Dendritic cell treated with granulocyte-macrophage colony-stimulating factor and Interleukin-4, amounts not matched to agents 40 ng/mL and 50 ng/mL, for 4 days (primary cell): ENCODE measurements at regions of chr6 and their contacts with region 1.

Region 1: GRCh38 chr6:106444777-106445507 is 84.4 kb downstream of the CRYBG1 start:
- H3K4me3 Mint-ChIP-seq: no peak overlapping the region
- H3K27ac Mint-ChIP-seq: no peak overlapping the region
- H3K4me1 Mint-ChIP-seq: peaks cover 19% of the 10 kb centered on the region
- H3K27me3 Mint-ChIP-seq: peaks cover 21% of the 10 kb centered on the region

Region 2: GRCh38 chr6:106069478-106069877 is 375.5 kb before region 1 on chr6:
- intact Hi-C with region 1: no loop called
- H3K4me3 Mint-ChIP-seq: no peak overlapping the region
- H3K27ac Mint-ChIP-seq: no peak overlapping the region
- H3K4me1 Mint-ChIP-seq: peaks cover 37% of the 10 kb centered on the region
- H3K27me3 Mint-ChIP-seq: no peaks in the 10 kb centered on the region

Region 3: GRCh38 chr6:106339334-106340029 is 105.5 kb before region 1 on chr6:
- intact Hi-C with region 1: loop called (anchors 5 kb)
- H3K4me3 Mint-ChIP-seq: peak overlapping the region; percentile 40
- H3K27ac Mint-ChIP-seq: no peak overlapping the region
- H3K4me1 Mint-ChIP-seq: peaks cover 8% of the 10 kb centered on the region
- H3K27me3 Mint-ChIP-seq: peaks cover 6% of the 10 kb centered on the region

Region 4: DNA sequence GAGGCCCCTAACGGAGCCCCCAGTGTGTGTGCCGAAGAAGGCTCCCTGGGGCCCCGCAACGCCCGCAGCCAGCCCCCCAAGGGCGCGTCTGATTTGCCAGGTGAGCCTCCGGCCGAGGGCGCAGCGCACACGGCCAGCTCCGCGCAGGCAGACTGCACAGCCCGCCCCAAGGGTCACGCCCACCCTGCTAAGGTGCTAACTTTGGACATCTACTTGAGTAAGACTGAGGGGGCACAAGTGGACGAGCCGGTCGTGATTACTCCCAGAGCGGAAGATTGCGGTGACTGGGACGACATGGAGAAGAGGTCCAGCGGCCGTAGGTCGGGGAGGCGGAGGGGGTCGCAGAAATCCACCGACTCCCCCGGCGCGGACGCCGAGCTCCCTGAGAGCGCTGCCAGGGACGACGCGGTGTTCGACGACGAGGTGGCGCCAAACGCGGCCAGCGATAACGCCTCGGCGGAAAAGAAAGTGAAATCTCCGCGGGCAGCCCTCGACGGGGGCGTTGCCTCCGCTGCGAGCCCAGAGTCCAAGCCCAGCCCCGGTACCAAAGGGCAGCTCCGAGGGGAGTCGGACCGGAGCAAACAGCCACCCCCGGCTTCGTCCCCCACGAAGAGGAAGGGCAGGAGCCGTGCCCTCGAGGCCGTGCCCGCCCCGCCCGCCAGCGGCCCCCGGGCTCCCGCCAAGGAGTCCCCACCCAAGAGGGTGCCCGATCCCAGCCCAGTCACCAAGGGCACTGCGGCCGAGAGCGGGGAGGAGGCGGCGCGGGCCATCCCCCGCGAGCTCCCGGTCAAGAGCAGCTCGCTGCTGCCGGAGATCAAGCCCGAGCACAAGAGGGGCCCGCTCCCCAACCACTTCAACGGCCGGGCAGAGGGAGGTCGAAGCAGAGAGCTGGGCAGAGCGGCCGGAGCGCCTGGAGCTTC is 67.4 kb after region 1 on chr6:
- intact Hi-C with region 1: loop called (anchors 2 kb)
- H3K4me3 Mint-ChIP-seq: peak overlapping the region; percentile 86
- H3K27ac Mint-ChIP-seq: peak overlapping the region; percentile 96
- H3K4me1 Mint-ChIP-seq: peaks cover 60% of the 10 kb centered on the region
- H3K27me3 Mint-ChIP-seq: no peaks in the 10 kb centered on the region

Region 5: GRCh38 chr6:106556368-106556960 is 111.5 kb after region 1 on chr6:
- intact Hi-C with region 1: loop called (anchors 2 kb)
- H3K4me3 Mint-ChIP-seq: no peak overlapping the region
- H3K27ac Mint-ChIP-seq: no peak overlapping the region
- H3K4me1 Mint-ChIP-seq: peaks cover 31% of the 10 kb centered on the region
- H3K27me3 Mint-ChIP-seq: no peaks in the 10 kb centered on the region

Region 6: DNA sequence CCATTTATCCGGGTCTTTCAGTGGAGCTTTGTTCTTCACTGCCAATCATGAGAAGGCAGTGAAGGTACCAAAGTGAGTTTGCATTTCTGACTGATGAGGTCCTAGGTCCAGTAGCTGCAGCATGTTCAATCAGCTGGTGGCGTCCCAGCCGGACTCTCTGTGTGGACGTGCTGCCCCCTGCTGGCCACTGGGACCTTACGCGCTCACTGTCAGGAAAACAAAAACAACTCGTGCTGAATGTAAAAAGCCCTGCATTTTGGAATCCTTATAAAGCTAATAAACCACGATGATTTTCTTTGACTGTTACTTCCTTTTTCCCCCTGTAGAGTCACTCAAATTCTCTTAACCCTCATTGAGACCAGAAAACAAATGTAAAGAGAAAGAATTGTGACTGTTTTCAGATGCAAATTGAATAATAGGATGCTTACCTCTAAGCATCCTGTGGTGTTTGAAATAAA is 534.5 kb after region 1 on chr6:
- intact Hi-C with region 1: loop called (anchors 1 kb)
- H3K4me3 Mint-ChIP-seq: no peak overlapping the region
- H3K27ac Mint-ChIP-seq: no peak overlapping the region
- H3K4me1 Mint-ChIP-seq: peaks cover 1% of the 10 kb centered on the region
- H3K27me3 Mint-ChIP-seq: peaks cover 47% of the 10 kb centered on the region

Region 7: DNA sequence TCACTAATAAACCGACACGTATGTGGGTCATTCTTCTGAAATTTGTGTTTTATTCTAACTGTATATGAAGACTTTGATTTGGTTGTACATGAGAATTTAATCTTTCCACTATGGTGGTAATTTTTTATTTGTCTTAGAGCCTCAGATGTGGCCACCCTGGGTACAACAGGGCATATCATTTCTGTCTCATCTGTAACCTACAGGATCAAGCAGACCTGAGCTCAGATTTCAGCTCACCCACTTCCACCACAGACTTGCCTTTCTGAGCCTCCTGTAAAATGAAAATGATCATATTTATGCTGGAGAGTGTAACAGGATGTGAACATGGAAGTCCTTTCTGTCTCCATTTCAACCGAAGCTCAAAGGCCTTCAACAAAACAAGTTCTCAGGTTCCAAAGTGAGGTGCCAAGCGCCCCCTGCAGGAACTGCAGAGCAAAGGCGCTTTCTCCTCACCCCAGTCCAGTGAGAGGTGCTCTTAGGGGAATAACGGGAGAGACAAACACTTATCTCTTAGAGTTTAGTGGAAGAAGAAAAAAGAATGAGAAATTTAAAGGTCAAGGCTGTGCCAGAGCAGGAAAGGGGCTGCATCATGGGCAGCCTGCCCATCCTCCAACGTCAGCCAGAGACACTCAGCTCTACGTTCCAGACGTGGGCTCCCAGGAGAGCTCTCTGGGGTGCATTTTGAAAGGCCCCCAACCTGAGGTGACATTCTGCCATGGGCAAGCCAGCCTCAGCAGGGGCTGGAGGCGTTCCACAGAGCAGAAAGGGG is 552.6 kb after region 1 on chr6:
- intact Hi-C with region 1: loop called (anchors 5 kb)
- H3K4me3 Mint-ChIP-seq: no peak overlapping the region
- H3K27ac Mint-ChIP-seq: no peak overlapping the region
- H3K4me1 Mint-ChIP-seq: no peaks in the 10 kb centered on the region
- H3K27me3 Mint-ChIP-seq: no peaks in the 10 kb centered on the region

Region 8: DNA sequence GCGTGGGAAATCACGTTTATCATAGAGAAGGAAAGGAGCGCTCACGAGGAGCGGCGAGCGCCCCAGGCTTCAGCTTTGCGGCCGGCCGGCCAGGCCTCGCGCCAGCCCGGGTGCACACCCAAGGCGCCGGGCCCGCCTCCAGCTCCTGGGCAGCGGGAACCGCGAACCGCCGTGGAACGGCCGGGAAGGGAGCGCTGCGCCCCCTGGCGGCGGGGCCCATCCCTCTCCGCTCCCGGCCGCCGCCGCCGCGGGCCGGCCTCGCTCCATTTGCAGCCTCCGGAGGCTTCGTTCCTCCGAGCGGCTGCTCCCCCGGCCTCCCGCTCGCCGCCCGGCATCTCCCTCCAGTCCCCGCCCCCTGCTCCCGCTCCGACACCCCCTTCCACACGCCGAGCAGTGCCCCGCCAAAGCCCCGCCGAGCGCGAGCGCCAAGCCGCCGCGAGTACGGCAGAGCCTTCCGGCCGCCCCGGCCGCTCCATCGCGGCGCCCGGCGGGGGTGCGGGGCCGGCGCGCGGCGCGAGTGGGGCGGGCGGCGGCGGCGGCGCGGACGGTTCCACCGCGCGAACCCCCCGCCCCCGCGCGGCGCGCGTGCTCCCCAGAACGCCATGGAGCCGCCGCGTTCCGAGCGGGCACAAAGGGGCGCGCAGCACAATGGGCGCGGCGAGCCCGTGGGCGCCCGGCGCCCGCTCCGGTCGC is 669.4 kb after region 1 on chr6:
- intact Hi-C with region 1: loop called (anchors 10 kb)
- H3K4me3 Mint-ChIP-seq: peak overlapping the region; percentile 78
- H3K27ac Mint-ChIP-seq: peak overlapping the region; percentile 51
- H3K4me1 Mint-ChIP-seq: peaks cover 34% of the 10 kb centered on the region
- H3K27me3 Mint-ChIP-seq: peaks cover 17% of the 10 kb centered on the region